ENCODE measurements at regions of chr10 and their contacts with region 1.

Region 1: DNA sequence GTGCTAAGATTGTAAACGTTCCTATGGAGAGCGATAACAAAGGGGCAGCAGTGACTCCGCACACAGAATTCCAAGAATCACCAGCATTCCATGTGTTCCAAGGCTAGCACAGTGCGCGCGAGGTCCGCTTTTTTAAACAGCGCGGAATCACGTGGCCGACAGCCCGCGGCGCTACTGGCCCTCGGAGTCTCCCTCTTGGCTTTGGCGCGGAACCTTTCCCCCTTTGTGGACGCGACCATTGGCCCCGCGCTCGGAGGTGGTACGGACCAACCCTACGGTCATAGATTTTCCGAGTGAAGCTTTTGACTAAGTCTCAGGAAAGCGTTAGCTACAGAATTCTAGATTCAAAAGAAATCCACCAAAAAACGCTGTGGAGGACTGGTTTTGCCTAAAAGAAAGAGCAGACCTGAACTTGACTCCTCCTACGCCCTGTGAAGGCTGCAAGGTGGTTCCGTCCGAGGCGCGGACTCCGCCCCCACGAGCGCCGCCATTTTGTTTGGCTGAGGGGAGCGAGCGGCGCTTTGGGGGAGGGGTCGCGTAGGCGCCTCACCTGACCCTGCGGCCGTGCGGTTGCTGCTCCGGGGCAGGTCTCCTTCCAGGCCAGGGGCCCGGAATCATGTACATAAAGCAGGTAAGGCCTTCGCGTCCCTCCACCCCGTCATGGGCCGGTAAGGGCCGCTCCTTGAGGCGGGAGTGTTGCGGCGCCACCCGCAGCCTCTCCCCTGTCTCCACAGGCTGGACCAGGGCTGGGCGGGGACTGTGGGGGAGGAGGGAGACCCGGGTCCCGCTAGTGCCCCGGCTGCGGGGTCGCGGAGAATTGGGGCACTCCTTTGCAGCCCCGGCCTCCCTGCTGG is at the start of gene SMC3:
- DNase-seq: peak; percentile 91 to 96 (median 93)
- H3K4me3 ChIP-seq: peak within 1 kb of the TSS; percentile 72 to 93
- H3K4me3 Mint-ChIP-seq: peak within 1 kb of the TSS; percentile 91 to 97 (median 96)
- H3K27ac ChIP-seq: peak within 1 kb of the TSS; percentile 90
- H3K27ac Mint-ChIP-seq: peak within 1 kb of the TSS; percentile 95 to 99 (median 98)
- H3K4me1 ChIP-seq: peaks cover 45% of the 10 kb centered on the region
- H3K4me1 Mint-ChIP-seq: peaks cover 26 to 51% (median 36%) of the 10 kb centered on the region in 4 donors
- H3K27me3 ChIP-seq: no peaks in the 10 kb centered on the region
- H3K27me3 Mint-ChIP-seq: peaks cover 1 to 12% of the 10 kb centered on the region in 2 donors
- total RNA-seq, gene SMC3: 53.4 to 59.5 TPM

Region 2: GRCh38 chr10:109922976-109923921 is 644.2 kb before region 1 on chr10 and contains the start of gene XPNPEP1:
- CTCF ChIA-PET with region 1: no interaction called
- POLR2A ChIA-PET with region 1: no interaction called
- intact Hi-C with region 1: loop called (anchors 10 kb)
- DNase-seq: peak; percentile 75 to 83 (median 79)
- H3K4me3 ChIP-seq: peak within 1 kb of the TSS; percentile 68 to 74
- H3K4me3 Mint-ChIP-seq: peak within 1 kb of the TSS; percentile 88 to 95 (median 92)
- H3K27ac ChIP-seq: peak within 1 kb of the TSS; percentile 86
- H3K27ac Mint-ChIP-seq: peak within 1 kb of the TSS; percentile 86 to 98 (median 96)
- H3K4me1 ChIP-seq: peaks cover 54% of the 10 kb centered on the region
- H3K4me1 Mint-ChIP-seq: peaks cover 39 to 57% (median 47%) of the 10 kb centered on the region in 4 donors
- H3K27me3 ChIP-seq: no peaks in the 10 kb centered on the region
- H3K27me3 Mint-ChIP-seq: no peaks in the 10 kb centered on the region
- total RNA-seq, gene XPNPEP1: 59.0 to 63.3 TPM

Region 3: GRCh38 chr10:110547139-110547761 is 20.2 kb before region 1 on chr10:
- CTCF ChIA-PET with region 1: interaction called, 15 read pairs
- POLR2A ChIA-PET with region 1: interaction called, 3 read pairs
- intact Hi-C with region 1: no loop called
- DNase-seq: peak in 4 of 5 donors; percentile 67 to 74 (median 70)
- H3K4me3 ChIP-seq: no peak overlapping the region
- H3K4me3 Mint-ChIP-seq: no peak overlapping the region
- H3K27ac ChIP-seq: no peak overlapping the region
- H3K27ac Mint-ChIP-seq: peak overlapping the region in 1 of 7 donors; percentile 59
- H3K4me1 ChIP-seq: peaks cover 8% of the 10 kb centered on the region
- H3K4me1 Mint-ChIP-seq: peaks cover 4 to 8% (median 5%) of the 10 kb centered on the region in 4 donors
- H3K27me3 ChIP-seq: peaks cover 3% of the 10 kb centered on the region
- H3K27me3 Mint-ChIP-seq: peaks cover 1 to 13% of the 10 kb centered on the region in 2 donors

Region 4: GRCh38 chr10:110556969-110557601 is 10.3 kb before region 1 on chr10:
- CTCF ChIA-PET with region 1: interaction called, 5 read pairs
- POLR2A ChIA-PET with region 1: interaction called, 7 read pairs
- intact Hi-C with region 1: loop called (anchors 1 kb)
- DNase-seq: peak; percentile 45 to 73 (median 62)
- H3K4me3 ChIP-seq: no peak overlapping the region
- H3K4me3 Mint-ChIP-seq: peak overlapping the region in 1 of 8 donors; percentile 51
- H3K27ac ChIP-seq: no peak overlapping the region
- H3K27ac Mint-ChIP-seq: peak overlapping the region in 1 of 7 donors; percentile 61
- H3K4me1 ChIP-seq: peaks cover 4% of the 10 kb centered on the region
- H3K4me1 Mint-ChIP-seq: peaks cover 3 to 6% (median 4%) of the 10 kb centered on the region in 4 donors
- H3K27me3 ChIP-seq: no peaks in the 10 kb centered on the region
- H3K27me3 Mint-ChIP-seq: peaks cover 4 to 9% of the 10 kb centered on the region in 2 donors

Measured in CD4-positive, alpha-beta memory T cell (primary cell).